A549 (cell line): ENCODE measurements at regions of chr1 and their contacts with region 1.

Region 1: GRCh38 chr1:223738465-223739365 is 26.4 kb downstream of the CAPN2 start:
- DNase-seq: no peak
- ATAC-seq: peak in 1 of 2 experiments; percentile 22; a peak in 3 of 6 replicates
- H3K4me3 ChIP-seq: no peak overlapping the region
- H3K27ac ChIP-seq: peak overlapping the region; percentile 66 to 68; a peak in 4 of 6 replicates
- H3K4me1 ChIP-seq: peaks cover 84% of the 10 kb centered on the region
- CTCF ChIP-seq: no peak
- EP300 ChIP-seq: no peak
- POLR2A ChIP-seq: no peak
- RAD21 ChIP-seq: no peak

Region 2: GRCh38 chr1:223712194-223712849 is 26.4 kb before region 1 on chr1 and contains the start of gene CAPN2:
- CTCF ChIA-PET with region 1: interaction called, 24 read pairs
- POLR2A ChIA-PET with region 1: interaction called, 3 read pairs
- DNase-seq: peak; percentile 81 to 84
- ATAC-seq: peak; percentile 71 to 75
- H3K4me3 ChIP-seq: peak within 1 kb of the TSS; percentile 88
- H3K27ac ChIP-seq: peak within 1 kb of the TSS; percentile 99
- H3K4me1 ChIP-seq: peaks cover 80% of the 10 kb centered on the region
- CTCF ChIP-seq: peak; percentile 70
- EP300 ChIP-seq: no peak
- POLR2A ChIP-seq: peak; percentile 71
- RAD21 ChIP-seq: peak; percentile 57 to 88
- polyA plus RNA-seq, gene CAPN2: 199 and 217 TPM in 2 replicates

Region 3: DNA sequence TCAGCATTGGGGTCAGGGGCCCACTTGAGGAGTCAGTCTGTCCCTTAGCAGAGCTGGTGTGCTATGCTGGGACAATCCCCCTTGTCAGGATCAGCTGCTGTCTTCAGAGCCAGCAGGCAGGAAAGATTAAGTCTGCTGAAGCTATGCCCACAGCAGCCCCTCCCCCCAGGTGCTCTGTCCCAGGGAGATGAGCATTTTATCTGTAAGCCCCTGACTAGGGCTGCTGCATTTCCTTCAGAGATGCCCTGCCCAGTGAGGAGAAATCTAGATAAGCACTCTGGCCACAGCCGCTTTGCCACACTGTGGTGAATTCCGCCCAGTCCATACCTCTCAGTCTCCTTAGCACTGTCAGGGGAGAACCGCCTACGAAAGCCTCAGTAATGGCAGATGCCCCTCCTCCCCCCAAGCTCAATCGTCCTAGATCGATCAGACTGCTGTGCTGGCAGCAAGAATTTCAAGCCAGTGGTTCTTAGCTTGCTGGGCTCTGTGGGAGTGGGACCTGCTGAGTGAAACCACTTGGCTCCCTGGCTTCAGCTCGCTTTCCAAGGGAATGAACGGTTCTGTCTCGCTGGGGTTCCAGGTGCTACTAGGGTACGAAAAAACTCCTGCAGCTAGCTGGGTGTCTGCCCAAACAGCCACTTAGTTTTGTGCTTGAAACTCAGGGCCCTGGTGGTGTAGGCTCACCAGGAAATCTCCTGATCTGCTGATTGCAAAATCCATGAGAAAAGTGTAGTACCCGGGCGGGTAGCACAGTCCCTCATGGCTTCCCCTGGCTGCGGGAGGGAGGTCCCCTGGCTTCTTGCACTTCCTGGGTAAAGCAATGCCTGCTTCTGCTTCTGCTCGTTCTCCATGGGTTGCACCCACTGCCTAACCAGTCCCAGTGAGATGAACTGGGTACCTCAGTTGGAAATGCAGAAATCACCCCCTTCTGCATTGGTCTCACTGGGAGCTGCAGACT is 132.2 kb after region 1 on chr1:
- CTCF ChIA-PET with region 1: no interaction called
- POLR2A ChIA-PET with region 1: no interaction called
- DNase-seq: no peak
- ATAC-seq: no peak
- H3K4me3 ChIP-seq: no peak overlapping the region
- H3K27ac ChIP-seq: no peak overlapping the region
- H3K4me1 ChIP-seq: no peaks in the 10 kb centered on the region
- CTCF ChIP-seq: no peak
- EP300 ChIP-seq: no peak
- POLR2A ChIP-seq: no peak
- RAD21 ChIP-seq: no peak